ENCODE measurements at regions of chr19 and their contacts with region 1.

Region 1: GRCh38 chr19:38989066-38989605 is 13.6 kb upstream of the FBXO17 start:
- DNase-seq: no peak
- ATAC-seq: peak; percentile 70
- H3K4me3 ChIP-seq: no peak overlapping the region
- H3K27ac ChIP-seq: no peak overlapping the region
- H3K4me1 ChIP-seq: peaks cover 7% of the 10 kb centered on the region; the same call in 1 of the 2 replicates
- H3K27me3 ChIP-seq: peaks cover 2% of the 10 kb centered on the region; the same call in 1 of the 2 replicates
- CTCF ChIP-seq: no peak
- POLR2A ChIP-seq: no peak
- RAD21 ChIP-seq: no peak

Region 2: DNA sequence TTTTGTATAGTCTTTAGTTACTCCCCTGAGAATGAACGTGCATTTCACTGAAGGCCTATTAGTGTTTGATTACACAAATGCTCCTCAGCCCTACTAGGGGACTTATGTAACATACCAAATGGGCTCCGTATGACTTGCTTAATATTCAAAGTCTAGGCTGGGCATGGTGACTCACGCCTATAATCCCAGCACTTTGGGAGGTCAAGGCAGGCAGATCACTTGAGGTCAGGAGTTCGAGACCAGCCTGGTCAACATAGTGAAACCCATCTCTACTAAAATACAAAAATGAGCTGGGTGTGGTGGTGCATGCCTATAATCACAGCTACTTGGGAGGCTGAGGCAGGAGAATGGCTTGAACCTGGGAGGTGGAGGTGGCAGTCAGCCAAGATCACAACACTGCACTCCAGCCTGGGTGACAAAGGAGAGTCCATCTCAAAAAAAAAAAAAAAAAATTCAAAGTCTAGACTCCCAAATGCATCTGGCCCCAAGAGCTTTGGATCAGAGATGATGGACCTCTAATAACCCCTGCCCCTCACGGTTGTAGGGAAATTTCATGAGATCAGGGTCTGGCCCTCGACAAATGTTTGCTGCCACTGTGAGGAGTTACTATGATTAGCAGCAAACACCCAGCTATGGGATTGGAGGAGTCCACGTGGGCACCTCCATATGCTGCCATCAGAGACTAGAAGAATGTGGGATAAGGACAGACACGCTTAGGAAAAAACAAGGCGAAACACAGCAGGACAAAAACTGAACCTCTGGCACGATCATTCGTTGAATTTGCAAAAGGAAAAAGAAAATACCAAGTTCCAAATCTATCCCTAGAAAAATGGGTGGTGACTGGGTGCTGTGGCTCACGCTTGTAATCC is 18.2 kb before region 1 on chr19:
- CTCF ChIA-PET with region 1: no interaction called
- POLR2A ChIA-PET with region 1: interaction called, 15 read pairs
- dilution Hi-C with region 1: no loop called
- in situ Hi-C with region 1: no loop called
- intact Hi-C with region 1: no loop called
- DNase-seq: no peak
- ATAC-seq: no peak
- H3K4me3 ChIP-seq: no peak overlapping the region
- H3K27ac ChIP-seq: no peak overlapping the region
- H3K4me1 ChIP-seq: no peaks in the 10 kb centered on the region
- H3K27me3 ChIP-seq: no peaks in the 10 kb centered on the region
- CTCF ChIP-seq: no peak
- POLR2A ChIP-seq: no peak
- RAD21 ChIP-seq: no peak